CD4-positive, alpha-beta T cell (primary cell): ENCODE measurements at regions of chr3 and their contacts with region 1.

Region 1: GRCh38 chr3:1380926-1381646 is 288.3 kb downstream of the CNTN6 start:
- DNase-seq: no peak
- ATAC-seq: no peak
- H3K4me3 ChIP-seq: no peak overlapping the region
- H3K4me3 Mint-ChIP-seq: no peak overlapping the region
- H3K27ac ChIP-seq: no peak overlapping the region
- H3K27ac Mint-ChIP-seq: no peak overlapping the region
- H3K4me1 ChIP-seq: no peaks in the 10 kb centered on the region
- H3K4me1 Mint-ChIP-seq: no peaks in the 10 kb centered on the region
- H3K27me3 ChIP-seq: no peaks in the 10 kb centered on the region
- H3K27me3 Mint-ChIP-seq: no peaks in the 10 kb centered on the region
- CTCF ChIP-seq: no peak

Region 2: DNA sequence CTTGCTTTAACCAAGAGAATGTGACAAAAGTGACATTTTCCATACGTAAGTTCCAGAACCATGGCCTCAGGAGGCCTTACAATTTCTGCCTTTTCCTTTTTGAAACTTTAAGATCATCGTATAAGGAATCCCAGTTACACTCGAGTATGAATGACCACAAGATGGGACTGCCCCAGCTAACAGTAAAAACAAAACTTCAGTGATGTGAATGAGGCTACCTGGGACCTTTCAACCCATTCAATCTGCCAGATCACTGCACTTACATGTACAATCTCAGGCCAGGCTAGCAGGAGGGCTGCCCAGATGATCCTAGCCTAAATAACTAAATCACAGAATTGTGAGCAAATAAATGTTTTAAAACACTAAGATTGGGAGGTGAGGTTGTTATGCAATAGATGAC is 40.5 kb after region 1 on chr3:
- CTCF ChIA-PET with region 1: no interaction called
- POLR2A ChIA-PET with region 1: no interaction called
- intact Hi-C with region 1: loop called in 1 of 2 experiments (anchors 1 kb)
- DNase-seq: no peak
- ATAC-seq: no peak
- H3K4me3 ChIP-seq: no peak overlapping the region
- H3K4me3 Mint-ChIP-seq: no peak overlapping the region
- H3K27ac ChIP-seq: no peak overlapping the region
- H3K27ac Mint-ChIP-seq: no peak overlapping the region
- H3K4me1 ChIP-seq: no peaks in the 10 kb centered on the region
- H3K4me1 Mint-ChIP-seq: no peaks in the 10 kb centered on the region
- H3K27me3 ChIP-seq: no peaks in the 10 kb centered on the region
- H3K27me3 Mint-ChIP-seq: no peaks in the 10 kb centered on the region
- CTCF ChIP-seq: no peak